Kidney (tissue), 22 donors: ENCODE measurements at regions of chr5 and their contacts with region 1.

Region 1: DNA sequence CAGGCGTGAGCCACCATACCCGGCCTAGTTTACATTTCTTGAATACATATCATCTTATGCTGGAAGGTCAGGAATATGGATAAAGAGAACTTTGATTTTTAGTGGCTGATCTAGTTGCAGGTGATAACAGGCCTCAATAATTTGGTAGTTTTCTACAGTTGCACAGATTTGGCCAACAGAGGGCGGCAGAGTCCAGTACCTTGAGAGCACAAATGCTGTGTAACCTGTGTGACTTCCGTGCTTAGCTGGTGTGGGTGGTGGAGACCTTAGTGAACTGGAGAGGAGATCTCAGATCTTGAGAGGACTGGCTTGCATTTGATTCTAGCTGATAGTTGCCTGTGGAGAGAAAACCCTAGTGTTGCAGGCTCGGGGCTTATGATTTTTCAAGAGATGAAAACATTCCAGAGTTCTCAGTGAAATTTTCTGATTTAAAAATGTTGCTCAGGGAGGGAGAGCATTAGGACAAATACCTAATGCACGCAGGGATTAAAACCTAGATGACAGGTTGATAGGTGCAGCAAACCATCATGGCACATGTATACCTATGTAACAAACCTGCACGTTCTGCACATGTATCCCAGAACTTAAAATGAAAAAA is 17.4 kb upstream of the GPR151 start:
- DNase-seq: peak in 4 of 5 donors; percentile 67 to 85 (median 72)
- H3K4me3 ChIP-seq: no peak overlapping the region
- H3K27ac ChIP-seq: no peak overlapping the region
- H3K4me1 ChIP-seq: no peaks in the 10 kb centered on the region
- H3K27me3 ChIP-seq: no peaks in the 10 kb centered on the region
- CTCF ChIP-seq: peak; percentile 80

Region 2: GRCh38 chr5:147190331-147190730 is 657.0 kb after region 1 on chr5:
- intact Hi-C with region 1: loop called (anchors 10 kb)
- DNase-seq: no peak
- H3K4me3 ChIP-seq: no peak overlapping the region
- H3K27ac ChIP-seq: no peak overlapping the region
- H3K4me1 ChIP-seq: no peaks in the 10 kb centered on the region
- H3K27me3 ChIP-seq: no peaks in the 10 kb centered on the region
- CTCF ChIP-seq: no peak